ENCODE measurements at regions of chr10 and their contacts with region 1.

Region 1: DNA sequence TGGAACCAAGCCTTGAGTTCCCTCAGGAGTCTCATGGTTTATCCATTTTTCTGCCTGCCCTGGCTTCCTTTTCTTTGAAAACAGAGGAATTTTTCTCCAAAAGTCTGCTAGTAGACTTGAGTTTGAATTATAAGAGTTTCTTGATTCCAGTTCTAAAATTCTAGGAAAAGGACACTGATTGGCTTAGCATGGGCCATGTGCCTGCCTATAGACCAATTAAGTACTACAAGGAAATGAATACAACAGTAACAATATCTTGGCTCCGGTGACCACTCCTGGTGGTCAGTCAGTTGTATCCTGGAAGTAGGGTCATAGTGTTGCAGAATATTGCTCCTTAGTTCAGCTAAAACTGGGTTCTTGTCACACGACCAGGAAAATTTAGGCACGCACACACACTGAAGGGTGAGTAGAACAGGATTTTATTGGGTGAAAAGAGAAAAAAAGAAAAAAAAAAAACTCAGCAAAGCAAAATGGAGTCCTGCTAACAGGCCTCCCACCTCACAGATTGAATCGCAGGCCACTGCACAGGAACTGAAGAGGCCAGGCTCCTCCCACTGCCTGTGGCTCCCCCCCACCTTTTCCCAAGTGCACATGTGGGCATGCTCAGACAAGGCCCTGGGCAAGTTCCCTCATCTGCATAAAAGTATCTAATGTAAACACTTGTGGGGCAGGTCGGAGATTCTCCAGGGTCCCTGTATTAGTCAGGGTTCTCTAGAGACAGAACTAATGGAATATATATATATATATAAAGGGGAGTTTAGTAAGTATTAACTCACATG is 155.1 kb downstream of the LYZL1 start:
- DNase-seq: no peak
- ATAC-seq: no peak
- H3K4me3 ChIP-seq: no peak overlapping the region
- H3K4me3 Mint-ChIP-seq: no peak overlapping the region
- H3K27ac ChIP-seq: no peak overlapping the region
- H3K27ac Mint-ChIP-seq: no peak overlapping the region
- H3K4me1 ChIP-seq: peaks cover 3% of the 10 kb centered on the region
- H3K4me1 Mint-ChIP-seq: peaks cover 11 to 20% of the 10 kb centered on the region in 2 donors
- H3K27me3 ChIP-seq: no peaks in the 10 kb centered on the region
- H3K27me3 Mint-ChIP-seq: no peaks in the 10 kb centered on the region
- CTCF ChIP-seq: no peak

Region 2: DNA sequence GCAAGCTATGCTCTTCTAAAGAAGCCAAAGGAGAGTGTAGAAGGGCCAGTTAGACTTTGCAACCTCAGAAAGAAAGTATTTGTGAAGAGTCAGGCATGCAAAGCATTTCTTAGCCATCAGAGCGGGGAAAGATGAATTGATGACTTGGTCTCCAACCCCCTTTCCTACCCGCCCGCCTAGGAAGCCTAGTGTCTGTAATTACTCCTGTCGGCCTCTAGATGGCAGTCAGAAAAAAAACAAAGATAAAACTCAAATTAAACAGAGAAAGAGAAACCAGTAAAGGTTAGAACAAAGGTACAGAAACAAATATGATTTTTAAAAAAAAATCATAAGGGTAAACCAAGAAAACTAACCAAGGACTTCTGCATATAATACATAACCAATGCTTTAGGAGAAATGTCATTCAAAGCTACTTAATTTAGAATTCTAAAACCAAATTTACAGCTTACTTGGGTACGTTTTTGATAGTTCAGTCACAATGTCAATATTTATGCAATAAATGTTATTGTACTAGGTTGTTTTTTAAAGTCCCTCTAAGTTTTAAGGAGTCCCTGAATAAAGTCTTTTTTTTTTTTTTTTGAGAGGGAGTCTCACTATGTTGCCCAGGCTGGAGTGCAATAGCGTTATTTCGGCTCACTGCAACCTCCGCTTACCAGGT is 57.5 kb before region 1 on chr10:
- intact Hi-C with region 1: loop called (anchors 5 kb)
- DNase-seq: peak in 1 of 2 donors; percentile 60
- ATAC-seq: peak; percentile 60 to 70 (median 63)
- H3K4me3 ChIP-seq: no peak overlapping the region
- H3K4me3 Mint-ChIP-seq: no peak overlapping the region
- H3K27ac ChIP-seq: no peak overlapping the region
- H3K27ac Mint-ChIP-seq: no peak overlapping the region
- H3K4me1 ChIP-seq: no peaks in the 10 kb centered on the region
- H3K4me1 Mint-ChIP-seq: no peaks in the 10 kb centered on the region
- H3K27me3 ChIP-seq: no peaks in the 10 kb centered on the region
- H3K27me3 Mint-ChIP-seq: peaks cover 0 to 12% of the 10 kb centered on the region in 2 donors
- CTCF ChIP-seq: peak; percentile 80

Region 3: DNA sequence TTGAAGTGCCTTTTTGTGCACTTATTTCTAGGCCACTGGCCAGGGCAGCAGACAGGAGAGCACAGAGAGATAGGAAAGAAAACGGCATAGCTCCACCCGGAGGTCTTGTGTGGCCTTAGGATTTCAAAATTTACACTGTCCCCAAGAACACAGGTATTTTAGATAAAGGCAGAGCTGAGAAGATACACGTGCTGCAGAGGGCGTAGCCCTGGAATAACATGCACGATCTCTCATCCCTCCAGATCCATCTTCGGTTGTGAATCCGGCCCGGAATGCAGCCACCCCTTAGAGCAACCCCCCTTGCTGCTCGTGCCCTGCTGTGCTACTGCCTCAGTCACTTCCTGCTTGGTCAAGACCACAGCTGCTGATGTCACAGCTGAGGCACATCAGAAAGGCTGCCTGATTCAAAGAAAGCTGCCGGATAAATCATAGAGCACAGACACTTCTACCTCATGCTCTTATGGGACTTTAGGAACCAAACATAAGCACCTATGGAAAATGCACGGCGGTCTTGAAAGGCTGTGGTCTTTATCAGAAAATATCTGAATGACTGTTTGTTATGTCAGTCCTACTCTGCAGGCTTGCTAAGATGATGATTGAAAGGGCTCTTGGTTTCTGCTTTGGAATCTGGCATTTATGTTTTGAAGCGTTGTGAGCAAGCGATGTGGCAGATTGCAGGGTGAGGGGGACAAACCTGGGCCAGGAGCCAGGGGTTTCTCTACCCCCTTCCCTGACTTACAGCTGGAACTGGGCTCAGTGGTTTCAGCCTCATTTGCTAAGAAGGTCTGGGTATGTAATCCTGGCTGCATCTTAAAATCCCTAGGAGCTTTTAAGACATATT is 38.9 kb after region 1 on chr10:
- intact Hi-C with region 1: no loop called
- DNase-seq: peak in 1 of 2 donors; percentile 17
- ATAC-seq: peak; percentile 81 to 95 (median 90)
- H3K4me3 ChIP-seq: no peak overlapping the region
- H3K4me3 Mint-ChIP-seq: peak overlapping the region; percentile 45
- H3K27ac ChIP-seq: no peak overlapping the region
- H3K27ac Mint-ChIP-seq: peak overlapping the region in 1 of 2 donors; percentile 86
- H3K4me1 ChIP-seq: peaks cover 28% of the 10 kb centered on the region
- H3K4me1 Mint-ChIP-seq: peaks cover 26 to 29% of the 10 kb centered on the region in 2 donors
- H3K27me3 ChIP-seq: no peaks in the 10 kb centered on the region
- H3K27me3 Mint-ChIP-seq: no peaks in the 10 kb centered on the region
- CTCF ChIP-seq: no peak

Region 4: DNA sequence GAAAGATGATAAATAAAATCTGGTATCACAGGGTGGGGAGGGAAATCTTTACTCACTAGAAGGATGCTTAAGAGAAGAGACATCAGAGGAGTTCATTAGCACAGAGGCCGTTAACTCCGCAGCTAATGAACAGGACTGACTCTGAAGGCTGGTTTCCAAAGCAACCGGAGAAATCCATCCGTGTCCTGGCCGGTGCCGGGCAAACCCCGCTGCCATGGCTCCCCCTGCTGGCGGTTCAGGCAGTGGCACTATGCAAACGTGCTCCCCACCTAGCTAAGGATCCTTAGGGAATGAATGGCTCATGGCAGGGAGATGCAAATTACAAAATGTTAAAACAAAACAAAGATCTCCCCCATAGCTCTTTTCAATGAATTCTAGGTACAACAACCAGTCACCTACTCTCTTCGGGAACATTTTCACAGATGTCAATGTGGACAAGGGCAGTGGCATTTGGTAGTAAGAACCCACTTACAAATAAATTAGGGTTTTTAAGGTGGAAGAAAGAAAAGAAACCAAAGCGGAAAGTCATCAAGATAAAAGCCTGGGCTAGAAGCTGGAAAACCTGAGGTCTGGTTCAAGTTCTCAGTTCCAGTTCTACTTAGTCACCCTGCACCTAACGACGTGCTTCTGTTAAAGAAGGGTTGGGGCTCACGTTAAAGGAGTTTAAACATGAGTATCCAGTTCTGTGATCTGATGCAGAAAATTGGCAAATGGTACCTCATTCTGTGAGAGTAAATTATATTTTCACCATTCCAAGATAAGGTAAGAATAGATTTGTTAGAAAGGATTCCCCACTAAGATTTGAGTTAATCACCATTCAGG is 52.6 kb after region 1 on chr10:
- intact Hi-C with region 1: loop called (anchors 2 kb)
- DNase-seq: peak; percentile 58 to 69
- ATAC-seq: peak; percentile 72 to 84 (median 80)
- H3K4me3 ChIP-seq: no peak overlapping the region
- H3K4me3 Mint-ChIP-seq: no peak overlapping the region
- H3K27ac ChIP-seq: no peak overlapping the region
- H3K27ac Mint-ChIP-seq: no peak overlapping the region
- H3K4me1 ChIP-seq: no peaks in the 10 kb centered on the region
- H3K4me1 Mint-ChIP-seq: no peaks in the 10 kb centered on the region
- H3K27me3 ChIP-seq: no peaks in the 10 kb centered on the region
- H3K27me3 Mint-ChIP-seq: no peaks in the 10 kb centered on the region
- CTCF ChIP-seq: peak; percentile 95

Measured in natural killer cell (primary cell).